ENCODE measurements at regions of chr6 and their contacts with region 1.

Region 1: DNA sequence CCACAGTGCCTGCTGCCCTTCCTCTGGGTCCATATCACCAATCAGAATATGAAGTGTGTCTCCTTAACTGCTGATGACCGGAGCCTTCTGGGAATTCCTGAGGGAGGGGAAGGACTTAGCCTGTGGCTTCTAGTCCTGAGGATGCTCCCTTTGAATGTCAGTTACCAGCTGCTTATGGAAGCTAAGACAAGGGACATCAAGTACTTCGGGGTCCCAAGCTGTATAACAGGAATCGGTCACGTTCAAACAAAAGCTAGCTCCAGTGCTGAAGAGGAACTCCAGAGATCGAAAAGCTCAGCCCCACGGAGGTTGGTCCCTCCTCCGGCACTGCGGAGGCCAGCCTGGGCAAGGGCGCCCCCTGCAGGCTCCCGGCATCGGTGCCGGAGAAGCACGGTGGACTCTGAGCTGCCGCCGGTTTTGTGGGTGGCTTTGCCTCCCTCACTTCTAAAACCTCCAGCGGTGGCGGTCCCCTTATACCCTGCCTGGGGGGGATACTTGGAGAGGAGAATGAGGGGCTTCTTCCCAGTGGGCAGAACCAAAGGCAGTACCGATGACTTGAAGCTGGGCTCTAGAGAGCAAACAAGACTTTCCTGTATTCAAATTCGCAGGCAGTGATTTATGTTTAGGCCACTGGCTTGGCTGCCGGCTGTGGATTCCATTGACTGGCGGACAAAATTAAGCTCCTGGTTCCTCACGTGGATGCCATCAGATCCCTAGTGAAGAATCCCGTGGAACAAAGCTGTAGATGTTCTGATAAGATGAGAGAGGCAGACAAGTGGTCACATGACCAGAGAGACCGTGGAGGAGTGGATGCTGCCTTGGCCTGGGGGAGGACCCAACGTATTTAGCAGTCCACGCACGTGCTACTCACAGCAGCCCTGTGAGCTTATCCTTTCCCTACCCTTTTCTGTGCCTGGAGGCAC is 16.2 kb upstream of the UBR2 start:
- DNase-seq: peak; percentile 88
- ATAC-seq: peak; percentile 96
- H3K4me3 Mint-ChIP-seq: peak overlapping the region; percentile 78
- H3K27ac Mint-ChIP-seq: peak overlapping the region; percentile 45; the same call in 1 of the 2 replicates
- H3K4me1 Mint-ChIP-seq: peaks cover 14% of the 10 kb centered on the region
- H3K27me3 Mint-ChIP-seq: peaks cover 8% of the 10 kb centered on the region
- CTCF ChIP-seq: peak; percentile 98

Region 2: DNA sequence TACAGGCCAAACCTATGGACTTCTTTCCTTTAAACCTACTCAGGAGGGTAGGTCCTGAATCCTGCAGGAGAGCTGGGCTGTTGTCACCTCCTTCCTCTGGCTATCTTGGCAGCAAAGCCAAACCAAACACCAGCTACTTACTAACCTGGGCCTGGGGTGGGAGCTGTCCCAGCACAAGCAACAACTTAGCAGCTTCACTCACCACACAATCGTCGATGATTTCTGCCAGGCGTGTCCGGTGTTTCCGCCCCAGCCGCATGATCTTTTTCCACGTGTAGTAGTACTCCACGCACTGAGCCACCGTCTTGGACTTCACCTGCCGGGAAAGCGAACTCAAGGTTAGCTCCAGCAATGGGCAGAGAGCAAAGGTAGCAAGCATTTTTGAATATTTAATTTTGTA is 304.6 kb before region 1 on chr6:
- CTCF ChIA-PET with region 1: interaction called, 17 read pairs
- POLR2A ChIA-PET with region 1: no interaction called
- DNase-seq: no peak
- ATAC-seq: no peak
- H3K4me3 Mint-ChIP-seq: no peak overlapping the region
- H3K27ac Mint-ChIP-seq: peak overlapping the region; percentile 67; the same call in 1 of the 2 replicates
- H3K4me1 Mint-ChIP-seq: peaks cover 33% of the 10 kb centered on the region
- H3K27me3 Mint-ChIP-seq: no peaks in the 10 kb centered on the region
- CTCF ChIP-seq: no peak

Region 3: DNA sequence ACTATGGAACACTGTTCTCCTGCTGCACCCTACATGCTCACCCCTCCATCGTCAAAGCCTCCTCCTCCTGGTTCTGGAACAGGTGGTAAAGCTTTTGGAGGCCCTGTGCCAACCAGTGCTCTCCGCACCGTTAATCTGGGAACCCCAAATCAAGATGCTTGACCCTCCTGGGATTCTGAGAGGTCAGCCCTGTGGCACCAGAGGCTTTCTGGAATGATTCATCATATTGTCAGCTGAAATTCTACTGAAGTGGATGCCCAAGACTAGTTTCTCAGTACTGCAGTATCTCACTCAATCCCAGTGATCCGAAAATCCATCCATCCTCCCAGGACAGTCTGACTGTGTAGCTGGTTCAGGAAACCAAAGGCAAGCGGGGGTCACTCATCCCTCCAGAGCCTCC is 188.6 kb before region 1 on chr6:
- CTCF ChIA-PET with region 1: interaction called, 15 read pairs
- POLR2A ChIA-PET with region 1: no interaction called
- DNase-seq: no peak
- ATAC-seq: no peak
- H3K4me3 Mint-ChIP-seq: no peak overlapping the region
- H3K27ac Mint-ChIP-seq: no peak overlapping the region
- H3K4me1 Mint-ChIP-seq: peaks cover 13% of the 10 kb centered on the region
- H3K27me3 Mint-ChIP-seq: no peaks in the 10 kb centered on the region
- CTCF ChIP-seq: no peak

Region 4: GRCh38 chr6:42404484-42404883 is 143.2 kb before region 1 on chr6:
- CTCF ChIA-PET with region 1: interaction called, 28 read pairs
- POLR2A ChIA-PET with region 1: no interaction called
- DNase-seq: no peak
- ATAC-seq: peak; percentile 88
- H3K4me3 Mint-ChIP-seq: peak overlapping the region; percentile 18; the same call in 1 of the 2 replicates
- H3K27ac Mint-ChIP-seq: peak overlapping the region; percentile 84
- H3K4me1 Mint-ChIP-seq: peaks cover 72% of the 10 kb centered on the region
- H3K27me3 Mint-ChIP-seq: no peaks in the 10 kb centered on the region
- CTCF ChIP-seq: no peak

Region 5: GRCh38 chr6:42453031-42453653 is 94.5 kb before region 1 on chr6:
- CTCF ChIA-PET with region 1: interaction called, 60 read pairs
- POLR2A ChIA-PET with region 1: interaction called, 13 read pairs
- DNase-seq: peak; percentile 92
- ATAC-seq: peak; percentile 66
- H3K4me3 Mint-ChIP-seq: peak overlapping the region; percentile 100
- H3K27ac Mint-ChIP-seq: peak overlapping the region; percentile 84
- H3K4me1 Mint-ChIP-seq: peaks cover 43% of the 10 kb centered on the region
- H3K27me3 Mint-ChIP-seq: peaks cover 4% of the 10 kb centered on the region
- CTCF ChIP-seq: no peak

Region 6: GRCh38 chr6:42520786-42521607 is 26.7 kb before region 1 on chr6:
- CTCF ChIA-PET with region 1: interaction called, 12 read pairs
- POLR2A ChIA-PET with region 1: no interaction called
- DNase-seq: no peak
- ATAC-seq: no peak
- H3K4me3 Mint-ChIP-seq: no peak overlapping the region
- H3K27ac Mint-ChIP-seq: no peak overlapping the region
- H3K4me1 Mint-ChIP-seq: no peaks in the 10 kb centered on the region
- H3K27me3 Mint-ChIP-seq: peaks cover 6% of the 10 kb centered on the region
- CTCF ChIP-seq: no peak